ENCODE measurements at regions of chr1 and their contacts with region 1.

Region 1: GRCh38 chr1:17653728-17654351 is 101.3 kb upstream of the ACTL8 start:
- DNase-seq: peak in 1 of 6 donors; percentile 47
- ATAC-seq: peak in 3 of 4 donors; percentile 47 to 62 (median 49)
- H3K4me3 ChIP-seq: no peak overlapping the region
- H3K27ac ChIP-seq: no peak overlapping the region
- H3K4me1 ChIP-seq: no peaks in the 10 kb centered on the region
- H3K27me3 ChIP-seq: no peaks in the 10 kb centered on the region
- CTCF ChIP-seq: peak in 3 of 4 donors; percentile 23 to 46 (median 40)

Region 2: DNA sequence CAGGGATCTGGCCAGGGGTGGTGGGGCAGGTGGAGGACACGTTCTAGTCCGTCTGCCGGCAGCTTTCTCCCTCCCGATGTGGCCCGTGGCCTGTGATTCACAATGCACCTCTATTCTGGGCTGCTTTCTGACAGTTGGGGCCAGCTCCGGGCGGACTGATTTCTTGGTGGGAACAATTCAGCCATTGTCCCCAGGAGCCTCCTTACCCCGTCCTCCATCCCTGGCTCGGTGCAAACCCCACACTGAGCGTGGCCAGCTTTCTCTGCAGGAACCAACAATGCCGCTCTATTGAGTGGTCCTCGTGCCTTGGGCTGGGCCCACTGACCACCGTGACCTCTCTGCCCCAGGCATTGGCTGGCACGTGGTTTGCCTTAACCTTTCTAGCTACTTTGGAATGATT is 564.3 kb before region 1 on chr1:
- intact Hi-C with region 1: no loop called
- DNase-seq: peak in 1 of 6 donors; percentile 14
- ATAC-seq: peak in 2 of 4 donors; percentile 24 to 49
- H3K4me3 ChIP-seq: no peak overlapping the region
- H3K27ac ChIP-seq: no peak overlapping the region
- H3K4me1 ChIP-seq: no peaks in the 10 kb centered on the region
- H3K27me3 ChIP-seq: no peaks in the 10 kb centered on the region
- CTCF ChIP-seq: no peak

Region 3: DNA sequence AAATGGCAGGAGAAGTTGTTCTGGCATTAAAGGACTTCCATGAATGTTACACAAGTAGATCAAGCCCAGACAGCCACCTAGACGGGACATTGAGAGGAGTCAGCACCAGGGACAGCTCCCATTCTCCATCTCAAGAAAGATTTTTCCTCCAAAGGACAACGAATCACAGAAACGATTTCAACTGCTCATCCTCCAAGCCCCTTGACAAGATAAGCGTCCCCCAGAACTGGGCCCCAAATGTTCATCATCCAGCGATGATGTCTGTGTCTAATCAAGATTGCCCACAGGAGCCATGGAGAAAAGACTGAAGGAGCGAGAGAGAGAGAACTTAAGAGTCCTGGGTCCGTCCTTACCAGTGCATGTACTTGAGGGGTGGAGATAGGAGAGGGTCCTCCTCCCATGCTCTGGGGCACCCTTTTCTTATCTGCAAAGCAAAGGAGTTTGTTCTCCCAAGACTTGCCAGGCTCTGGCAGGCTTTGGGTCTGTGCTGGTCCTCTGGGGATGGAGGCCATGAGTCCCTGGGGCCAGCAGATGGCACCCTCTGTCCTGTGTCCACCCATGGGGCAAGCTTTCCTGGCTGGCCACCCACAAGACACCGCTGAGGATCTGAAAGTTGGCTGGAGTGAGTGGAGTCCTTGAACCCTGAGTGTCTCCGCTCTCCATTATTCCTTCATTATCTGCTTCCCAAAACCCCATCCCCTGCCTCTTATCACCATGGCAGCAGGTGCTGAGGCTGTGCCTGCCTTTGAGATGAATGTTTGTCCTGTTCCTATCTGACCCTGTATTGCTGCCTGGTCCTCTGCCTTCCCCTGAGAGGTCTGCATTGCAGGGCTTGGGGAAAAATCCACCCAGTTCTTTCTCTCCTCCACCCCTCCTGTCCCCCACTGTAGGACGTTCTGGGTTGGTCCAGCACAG is 265.9 kb after region 1 on chr1:
- intact Hi-C with region 1: loop called in 1 of 3 experiments (anchors 10 kb)
- DNase-seq: no peak
- ATAC-seq: peak in 3 of 4 donors; percentile 51 to 61 (median 57)
- H3K4me3 ChIP-seq: no peak overlapping the region
- H3K27ac ChIP-seq: no peak overlapping the region
- H3K4me1 ChIP-seq: no peaks in the 10 kb centered on the region
- H3K27me3 ChIP-seq: peaks cover 0 to 4% (median 0%) of the 10 kb centered on the region in 4 donors
- CTCF ChIP-seq: no peak

Measured in pancreas (tissue), 10 donors.